Naive thymus-derived CD4-positive, alpha-beta T cell (primary cell): ENCODE measurements at regions of chr9 and their contacts with region 1.

Region 1: GRCh38 chr9:33076358-33077004 is at the start of gene SMU1:
- DNase-seq: peak; percentile 82 to 97 (median 95)
- ATAC-seq: peak; percentile 97
- H3K4me3 ChIP-seq: peak within 1 kb of the TSS; percentile 82
- H3K4me3 Mint-ChIP-seq: peak within 1 kb of the TSS; percentile 95 to 100 (median 98)
- H3K27ac ChIP-seq: peak within 1 kb of the TSS; percentile 93
- H3K27ac Mint-ChIP-seq: peak within 1 kb of the TSS; percentile 97 to 100 (median 99)
- H3K4me1 ChIP-seq: peaks cover 16 to 21% of the 10 kb centered on the region in 2 donors
- H3K4me1 Mint-ChIP-seq: peaks cover 17 to 61% (median 48%) of the 10 kb centered on the region in 7 donors
- H3K27me3 ChIP-seq: no peaks in the 10 kb centered on the region
- H3K27me3 Mint-ChIP-seq: no peaks in the 10 kb centered on the region
- total RNA-seq, gene SMU1: 22.3 to 32.9 (median 25.6) TPM

Region 2: DNA sequence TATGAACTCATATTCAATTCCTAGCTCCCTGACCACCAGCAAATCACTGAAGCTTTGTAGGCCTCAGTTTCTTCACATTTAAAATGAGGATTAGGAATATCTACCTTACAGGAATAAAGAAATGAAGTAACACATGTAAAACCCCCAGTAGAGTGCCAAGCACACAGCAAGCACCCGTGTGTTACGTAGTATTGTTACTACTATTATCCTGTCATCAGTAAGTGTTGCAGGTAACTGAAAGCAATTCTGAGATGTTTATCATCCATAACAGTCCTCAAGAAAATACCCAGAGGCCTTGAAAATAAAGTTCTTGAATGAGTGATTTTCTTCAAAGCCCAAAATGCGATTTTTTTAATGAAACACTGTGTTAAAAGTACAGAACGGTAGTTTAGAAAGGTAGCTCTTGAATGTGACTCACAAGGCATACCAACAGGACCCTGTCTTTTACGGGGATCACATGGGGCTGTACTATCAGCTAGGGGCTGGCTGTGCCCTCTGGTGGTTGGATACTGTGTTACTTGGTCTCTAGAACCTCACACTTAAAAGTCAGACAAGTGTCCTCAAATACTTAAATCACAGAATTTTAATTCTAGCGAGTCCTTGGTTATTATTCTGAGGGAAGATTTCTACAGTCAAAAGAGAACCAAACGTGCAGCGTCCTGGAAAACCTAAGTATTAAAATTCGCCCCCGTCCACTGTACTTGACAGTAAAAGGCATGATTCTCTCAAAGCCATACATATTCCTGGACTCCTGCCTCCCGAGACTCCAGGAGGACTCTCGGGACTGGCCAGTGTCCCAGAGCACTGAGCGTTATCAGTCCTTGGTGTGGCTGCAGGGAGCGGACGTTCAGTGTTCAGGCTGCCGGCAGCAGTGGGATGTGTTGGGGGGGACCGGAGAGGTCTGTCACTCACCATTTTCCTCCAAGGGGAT is 504.2 kb before region 1 on chr9:
- CTCF ChIA-PET with region 1: no interaction called
- POLR2A ChIA-PET with region 1: no interaction called
- intact Hi-C with region 1: loop called in 1 of 2 experiments (anchors 5 kb)
- DNase-seq: peak; percentile 33 to 85 (median 77)
- ATAC-seq: peak; percentile 92
- H3K4me3 ChIP-seq: peak overlapping the region; percentile 92
- H3K4me3 Mint-ChIP-seq: peak overlapping the region; percentile 98 to 100 (median 99)
- H3K27ac ChIP-seq: peak overlapping the region; percentile 86
- H3K27ac Mint-ChIP-seq: peak overlapping the region; percentile 93 to 99 (median 99)
- H3K4me1 ChIP-seq: peaks cover 14 to 22% of the 10 kb centered on the region in 2 donors
- H3K4me1 Mint-ChIP-seq: peaks cover 18 to 43% (median 30%) of the 10 kb centered on the region in 7 donors
- H3K27me3 ChIP-seq: no peaks in the 10 kb centered on the region
- H3K27me3 Mint-ChIP-seq: peaks cover 0 to 10% (median 0%) of the 10 kb centered on the region in 5 donors

Region 3: DNA sequence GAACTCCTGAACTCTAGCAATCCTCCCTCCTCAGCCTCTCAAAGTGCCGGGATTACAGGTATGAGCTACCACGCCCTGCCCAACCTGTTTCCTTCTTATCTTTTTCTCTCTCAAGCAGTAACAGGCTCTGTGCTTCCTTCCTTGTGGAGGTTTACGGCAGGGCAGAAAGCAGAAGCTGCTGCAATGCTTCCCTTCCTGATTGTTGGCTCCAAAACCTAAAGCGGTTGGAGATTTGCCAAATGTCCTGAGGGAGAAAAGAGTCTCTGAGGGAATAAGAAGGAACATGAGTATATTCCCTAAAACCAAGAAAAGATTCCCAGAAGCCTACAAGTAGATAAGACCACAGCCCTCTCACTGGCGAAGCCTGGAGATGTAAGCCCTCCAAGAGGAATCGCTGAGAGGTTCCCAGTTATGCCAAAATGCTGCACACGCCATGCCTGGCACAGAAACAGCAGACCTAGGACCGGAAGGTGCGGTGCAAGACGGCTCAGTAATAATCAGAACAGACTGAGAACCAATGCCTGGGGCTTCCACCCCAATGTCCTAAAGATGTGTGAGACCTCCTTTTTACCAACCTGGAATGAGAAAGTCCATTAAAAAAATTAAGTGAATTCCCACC is 148.2 kb before region 1 on chr9:
- CTCF ChIA-PET with region 1: no interaction called
- POLR2A ChIA-PET with region 1: no interaction called
- intact Hi-C with region 1: no loop called
- DNase-seq: no peak
- ATAC-seq: no peak
- H3K4me3 ChIP-seq: no peak overlapping the region
- H3K4me3 Mint-ChIP-seq: no peak overlapping the region
- H3K27ac ChIP-seq: no peak overlapping the region
- H3K27ac Mint-ChIP-seq: peak overlapping the region in 1 of 9 donors; percentile 45
- H3K4me1 ChIP-seq: no peaks in the 10 kb centered on the region
- H3K4me1 Mint-ChIP-seq: no peaks in the 10 kb centered on the region
- H3K27me3 ChIP-seq: no peaks in the 10 kb centered on the region
- H3K27me3 Mint-ChIP-seq: peaks cover 0 to 24% (median 6%) of the 10 kb centered on the region in 5 donors

Region 4: GRCh38 chr9:32965999-32966722 is 110.3 kb before region 1 on chr9:
- CTCF ChIA-PET with region 1: no interaction called
- POLR2A ChIA-PET with region 1: no interaction called
- intact Hi-C with region 1: no loop called
- DNase-seq: no peak
- ATAC-seq: no peak
- H3K4me3 ChIP-seq: no peak overlapping the region
- H3K4me3 Mint-ChIP-seq: no peak overlapping the region
- H3K27ac ChIP-seq: no peak overlapping the region
- H3K27ac Mint-ChIP-seq: peak overlapping the region in 1 of 9 donors; percentile 68
- H3K4me1 ChIP-seq: no peaks in the 10 kb centered on the region
- H3K4me1 Mint-ChIP-seq: peaks cover 0 to 5% (median 0%) of the 10 kb centered on the region in 7 donors
- H3K27me3 ChIP-seq: no peaks in the 10 kb centered on the region
- H3K27me3 Mint-ChIP-seq: no peaks in the 10 kb centered on the region

Region 5: GRCh38 chr9:33044127-33044673 is 32.3 kb before region 1 on chr9:
- CTCF ChIA-PET with region 1: no interaction called
- POLR2A ChIA-PET with region 1: interaction called, 3 read pairs
- intact Hi-C with region 1: loop called in 1 of 2 experiments (anchors 1 kb)
- DNase-seq: peak; percentile 43 to 74 (median 50)
- ATAC-seq: peak; percentile 80
- H3K4me3 ChIP-seq: peak overlapping the region; percentile 56
- H3K4me3 Mint-ChIP-seq: peak overlapping the region; percentile 69 to 91 (median 82)
- H3K27ac ChIP-seq: peak overlapping the region; percentile 68
- H3K27ac Mint-ChIP-seq: peak overlapping the region; percentile 59 to 92 (median 79)
- H3K4me1 ChIP-seq: peaks cover 0 to 6% of the 10 kb centered on the region in 2 donors
- H3K4me1 Mint-ChIP-seq: peaks cover 8 to 24% (median 19%) of the 10 kb centered on the region in 7 donors
- H3K27me3 ChIP-seq: no peaks in the 10 kb centered on the region
- H3K27me3 Mint-ChIP-seq: no peaks in the 10 kb centered on the region

Region 6: DNA sequence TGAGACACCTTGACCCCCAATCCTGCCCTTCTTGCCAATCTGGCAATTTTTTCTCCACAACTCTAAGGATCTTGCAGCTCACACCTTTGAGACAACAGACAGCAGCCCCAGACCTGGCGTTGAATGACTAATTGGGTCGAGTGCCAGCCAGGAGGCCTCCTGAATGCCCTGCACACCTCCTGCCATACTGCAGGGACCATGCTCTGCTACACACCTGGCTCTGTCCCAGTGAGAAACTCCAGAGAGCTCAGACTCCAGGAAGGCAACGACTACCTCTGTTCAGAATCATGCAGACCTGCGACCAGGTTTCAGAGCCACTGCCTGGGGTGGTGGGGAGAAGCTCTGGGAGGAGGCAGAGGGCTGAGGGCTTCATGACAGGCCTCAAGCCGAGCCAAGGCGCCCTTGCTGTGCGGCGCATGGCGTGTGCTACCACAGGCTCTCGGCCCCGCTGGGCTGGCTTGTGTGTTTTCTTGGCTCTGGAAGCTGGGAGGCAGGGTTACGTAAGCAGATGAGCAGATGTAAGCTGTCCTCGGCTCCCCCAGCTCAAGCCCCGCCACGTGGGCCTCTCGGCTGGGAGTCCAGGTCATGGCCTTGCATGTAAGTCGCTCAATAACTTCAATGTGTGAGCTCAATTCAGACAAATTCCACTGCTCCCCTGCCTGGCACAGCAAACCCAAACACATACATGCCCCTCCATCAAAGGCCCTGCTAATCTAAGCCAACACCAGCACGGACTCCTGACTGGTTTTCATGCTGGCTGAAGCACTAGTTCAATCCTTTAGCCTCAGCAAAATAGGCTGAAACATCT is 63.1 kb after region 1 on chr9:
- CTCF ChIA-PET with region 1: no interaction called
- POLR2A ChIA-PET with region 1: interaction called, 3 read pairs
- intact Hi-C with region 1: loop called in 1 of 2 experiments (anchors 2 kb)
- DNase-seq: no peak
- ATAC-seq: no peak
- H3K4me3 ChIP-seq: no peak overlapping the region
- H3K4me3 Mint-ChIP-seq: peak overlapping the region in 9 of 10 donors; percentile 3 to 69 (median 32)
- H3K27ac ChIP-seq: no peak overlapping the region
- H3K27ac Mint-ChIP-seq: peak overlapping the region; percentile 53 to 98 (median 84)
- H3K4me1 ChIP-seq: peaks cover 72 to 92% of the 10 kb centered on the region in 2 donors
- H3K4me1 Mint-ChIP-seq: peaks cover 76 to 95% (median 85%) of the 10 kb centered on the region in 7 donors
- H3K27me3 ChIP-seq: no peaks in the 10 kb centered on the region
- H3K27me3 Mint-ChIP-seq: no peaks in the 10 kb centered on the region

Region 7: GRCh38 chr9:33177639-33178038 is 101.2 kb after region 1 on chr9:
- CTCF ChIA-PET with region 1: interaction called, 4 read pairs
- POLR2A ChIA-PET with region 1: interaction called, 3 read pairs
- intact Hi-C with region 1: loop called in 1 of 2 experiments (anchors 1 kb)
- DNase-seq: no peak
- ATAC-seq: no peak
- H3K4me3 ChIP-seq: no peak overlapping the region
- H3K4me3 Mint-ChIP-seq: no peak overlapping the region
- H3K27ac ChIP-seq: no peak overlapping the region
- H3K27ac Mint-ChIP-seq: no peak overlapping the region
- H3K4me1 ChIP-seq: no peaks in the 10 kb centered on the region
- H3K4me1 Mint-ChIP-seq: peaks cover 0 to 4% (median 3%) of the 10 kb centered on the region in 7 donors
- H3K27me3 ChIP-seq: no peaks in the 10 kb centered on the region
- H3K27me3 Mint-ChIP-seq: peaks cover 0 to 33% (median 0%) of the 10 kb centered on the region in 5 donors

Region 8: GRCh38 chr9:33264473-33265177 is 188.1 kb after region 1 on chr9 and contains the starts of genes BAG1 and CHMP5:
- CTCF ChIA-PET with region 1: no interaction called
- POLR2A ChIA-PET with region 1: interaction called, 6 read pairs
- intact Hi-C with region 1: loop called (anchors 1 kb)
- DNase-seq: peak; percentile 98 to 100 (median 100)
- ATAC-seq: peak; percentile 99
- H3K4me3 ChIP-seq: peak within 1 kb of the TSS; percentile 95
- H3K4me3 Mint-ChIP-seq: peak within 1 kb of the TSS; percentile 82 to 98 (median 92)
- H3K27ac ChIP-seq: peak within 1 kb of the TSS; percentile 88
- H3K27ac Mint-ChIP-seq: peak within 1 kb of the TSS; percentile 84 to 99 (median 97)
- H3K4me1 ChIP-seq: peaks cover 15 to 34% of the 10 kb centered on the region in 2 donors
- H3K4me1 Mint-ChIP-seq: peaks cover 36 to 66% (median 55%) of the 10 kb centered on the region in 7 donors
- H3K27me3 ChIP-seq: no peaks in the 10 kb centered on the region
- H3K27me3 Mint-ChIP-seq: peaks cover 0 to 2% (median 0%) of the 10 kb centered on the region in 5 donors
- total RNA-seq, gene BAG1: 48.6 to 77.2 (median 61.0) TPM
- total RNA-seq, gene CHMP5: 21.4 to 74.6 (median 35.3) TPM